Activated CD4-positive, alpha-beta T cell treated with anti-CD3 and anti-CD28 coated beads, Interleukin-2, amount 10 ng/mL, durations not matched to agents 24 days and 14 days (primary cell): ENCODE measurements at regions of chr9 and their contacts with region 1.

Region 1: GRCh38 chr9:8179381-8180053 is 379.9 kb upstream of the DMAC1 start:
- DNase-seq: no peak
- H3K4me3 Mint-ChIP-seq: no peak overlapping the region
- H3K27ac Mint-ChIP-seq: no peak overlapping the region
- H3K4me1 Mint-ChIP-seq: no peaks in the 10 kb centered on the region
- H3K27me3 Mint-ChIP-seq: no peaks in the 10 kb centered on the region

Region 2: GRCh38 chr9:8115570-8115969 is 63.9 kb before region 1 on chr9:
- intact Hi-C with region 1: loop called (anchors 10 kb)
- DNase-seq: no peak
- H3K4me3 Mint-ChIP-seq: no peak overlapping the region
- H3K27ac Mint-ChIP-seq: peak overlapping the region; percentile 58
- H3K4me1 Mint-ChIP-seq: peaks cover 9% of the 10 kb centered on the region
- H3K27me3 Mint-ChIP-seq: peaks cover 3% of the 10 kb centered on the region

Region 3: GRCh38 chr9:8224381-8224801 is 44.9 kb after region 1 on chr9:
- intact Hi-C with region 1: no loop called
- DNase-seq: no peak
- H3K4me3 Mint-ChIP-seq: no peak overlapping the region
- H3K27ac Mint-ChIP-seq: no peak overlapping the region
- H3K4me1 Mint-ChIP-seq: no peaks in the 10 kb centered on the region
- H3K27me3 Mint-ChIP-seq: no peaks in the 10 kb centered on the region